ENCODE measurements at regions of chr2 and their contacts with region 1.

Region 1: GRCh38 chr2:200963124-200963917 is at the start of gene ORC2:
- DNase-seq: peak; percentile 95 to 96 (median 96)
- H3K4me3 ChIP-seq: peak within 1 kb of the TSS; percentile 80 to 97 (median 91)
- H3K27ac ChIP-seq: peak within 1 kb of the TSS; percentile 84 to 92
- H3K4me1 ChIP-seq: peaks cover 9 to 30% (median 20%) of the 10 kb centered on the region in 4 experiments
- H3K27me3 ChIP-seq: no peaks in the 10 kb centered on the region

Region 2: GRCh38 chr2:200975672-200976071 is 12.4 kb after region 1 on chr2:
- CTCF ChIA-PET with region 1: interaction called, 50 read pairs
- POLR2A ChIA-PET with region 1: interaction called, 4 read pairs
- DNase-seq: no peak
- H3K4me3 ChIP-seq: no peak overlapping the region
- H3K27ac ChIP-seq: no peak overlapping the region
- H3K4me1 ChIP-seq: no peaks in the 10 kb centered on the region
- H3K27me3 ChIP-seq: no peaks in the 10 kb centered on the region

Region 3: GRCh38 chr2:201182650-201183364 is 219.5 kb after region 1 on chr2 and contains the start of gene CASP10:
- CTCF ChIA-PET with region 1: interaction called, 10 read pairs
- POLR2A ChIA-PET with region 1: no interaction called
- DNase-seq: peak; percentile 92 to 95 (median 95)
- H3K4me3 ChIP-seq: peak within 1 kb of the TSS; percentile 14 to 100 (median 79)
- H3K27ac ChIP-seq: peak within 1 kb of the TSS; percentile 78 to 90
- H3K4me1 ChIP-seq: peaks cover 29 to 46% (median 30%) of the 10 kb centered on the region in 4 experiments
- H3K27me3 ChIP-seq: no peaks in the 10 kb centered on the region